ENCODE measurements at regions of chr12 and their contacts with region 1.

Region 1: GRCh38 chr12:77685112-77685511 is 145.6 kb upstream of the NAV3 start:
- DNase-seq: peak; percentile 7
- CTCF ChIP-seq: peak; percentile 62

Region 2: GRCh38 chr12:77049767-77050353 is 635.3 kb before region 1 on chr12:
- in situ Hi-C with region 1: loop called (anchors 25 kb)
- DNase-seq: peak; percentile 44
- CTCF ChIP-seq: peak; percentile 74

Region 3: GRCh38 chr12:77152623-77153193 is 532.4 kb before region 1 on chr12:
- in situ Hi-C with region 1: loop called (anchors 25 kb)
- DNase-seq: no peak
- CTCF ChIP-seq: peak; percentile 31